B cell (primary cell): ENCODE measurements at regions of chrX and their contacts with region 1.

Region 1: GRCh38 chrX:149527705-149528104 is 13.1 kb upstream of the EOLA1 start:
- DNase-seq: peak; percentile 56
- ATAC-seq: peak; percentile 25
- H3K4me3 ChIP-seq: no peak overlapping the region
- H3K4me3 Mint-ChIP-seq: peak overlapping the region; percentile 7
- H3K27ac ChIP-seq: no peak overlapping the region
- H3K27ac Mint-ChIP-seq: peak overlapping the region; percentile 44
- H3K4me1 ChIP-seq: peaks cover 4 to 10% of the 10 kb centered on the region in 2 donors
- H3K4me1 Mint-ChIP-seq: peaks cover 17% of the 10 kb centered on the region
- H3K27me3 ChIP-seq: no peaks in the 10 kb centered on the region
- H3K27me3 Mint-ChIP-seq: no peaks in the 10 kb centered on the region
- CTCF ChIP-seq: peak; percentile 50

Region 2: DNA sequence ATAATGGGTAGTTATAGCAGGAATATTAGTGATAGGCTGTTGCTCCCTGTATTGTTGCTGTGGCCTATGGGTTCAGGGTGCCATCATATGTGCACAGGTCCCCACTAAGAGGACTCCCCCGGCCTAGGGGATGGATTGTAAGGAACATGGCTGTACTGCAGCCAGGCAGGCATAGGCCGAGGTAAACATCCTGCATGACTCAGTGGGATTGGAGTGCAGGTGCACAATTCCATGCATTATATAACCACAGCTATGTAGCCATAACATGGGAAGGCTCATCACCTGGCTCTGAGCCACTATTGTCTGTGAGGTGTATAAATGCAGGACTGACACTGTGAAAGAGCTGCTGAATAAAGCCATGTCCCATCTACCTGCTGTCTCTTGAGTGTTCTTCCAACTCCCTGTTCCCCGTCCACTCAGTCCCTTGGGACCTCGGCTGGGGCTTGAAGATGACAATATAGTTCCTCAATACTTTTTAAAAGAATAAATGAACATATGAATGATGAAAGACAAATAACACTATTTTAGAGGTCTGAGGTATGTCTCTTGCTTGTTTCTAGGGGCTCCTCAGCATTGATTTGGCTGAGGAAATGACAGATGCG is 447.8 kb before region 1 on chrX:
- CTCF ChIA-PET with region 1: no interaction called
- POLR2A ChIA-PET with region 1: no interaction called
- intact Hi-C with region 1: no loop called
- DNase-seq: no peak
- ATAC-seq: no peak
- H3K4me3 ChIP-seq: no peak overlapping the region
- H3K4me3 Mint-ChIP-seq: no peak overlapping the region
- H3K27ac ChIP-seq: no peak overlapping the region
- H3K27ac Mint-ChIP-seq: no peak overlapping the region
- H3K4me1 ChIP-seq: no peaks in the 10 kb centered on the region
- H3K4me1 Mint-ChIP-seq: no peaks in the 10 kb centered on the region
- H3K27me3 ChIP-seq: no peaks in the 10 kb centered on the region
- H3K27me3 Mint-ChIP-seq: no peaks in the 10 kb centered on the region
- CTCF ChIP-seq: no peak

Region 3: GRCh38 chrX:149504915-149505651 is 22.6 kb before region 1 on chrX and contains the start of gene IDS:
- CTCF ChIA-PET with region 1: interaction called, 4 read pairs
- POLR2A ChIA-PET with region 1: interaction called, 14 read pairs
- intact Hi-C with region 1: loop called (anchors 2 kb)
- DNase-seq: peak; percentile 91
- ATAC-seq: peak; percentile 72
- H3K4me3 ChIP-seq: peak within 1 kb of the TSS; percentile 24 to 81 (median 79)
- H3K4me3 Mint-ChIP-seq: peak within 1 kb of the TSS; percentile 95
- H3K27ac ChIP-seq: peak within 1 kb of the TSS; percentile 95 to 98
- H3K27ac Mint-ChIP-seq: peak within 1 kb of the TSS; percentile 96
- H3K4me1 ChIP-seq: peaks cover 12 to 24% of the 10 kb centered on the region in 2 donors
- H3K4me1 Mint-ChIP-seq: peaks cover 18% of the 10 kb centered on the region
- H3K27me3 ChIP-seq: peaks cover 0 to 5% (median 0%) of the 10 kb centered on the region in 4 experiments
- H3K27me3 Mint-ChIP-seq: peaks cover 2% of the 10 kb centered on the region
- CTCF ChIP-seq: no peak
- total RNA-seq, gene IDS: 169 TPM in 2 replicates

Region 4: DNA sequence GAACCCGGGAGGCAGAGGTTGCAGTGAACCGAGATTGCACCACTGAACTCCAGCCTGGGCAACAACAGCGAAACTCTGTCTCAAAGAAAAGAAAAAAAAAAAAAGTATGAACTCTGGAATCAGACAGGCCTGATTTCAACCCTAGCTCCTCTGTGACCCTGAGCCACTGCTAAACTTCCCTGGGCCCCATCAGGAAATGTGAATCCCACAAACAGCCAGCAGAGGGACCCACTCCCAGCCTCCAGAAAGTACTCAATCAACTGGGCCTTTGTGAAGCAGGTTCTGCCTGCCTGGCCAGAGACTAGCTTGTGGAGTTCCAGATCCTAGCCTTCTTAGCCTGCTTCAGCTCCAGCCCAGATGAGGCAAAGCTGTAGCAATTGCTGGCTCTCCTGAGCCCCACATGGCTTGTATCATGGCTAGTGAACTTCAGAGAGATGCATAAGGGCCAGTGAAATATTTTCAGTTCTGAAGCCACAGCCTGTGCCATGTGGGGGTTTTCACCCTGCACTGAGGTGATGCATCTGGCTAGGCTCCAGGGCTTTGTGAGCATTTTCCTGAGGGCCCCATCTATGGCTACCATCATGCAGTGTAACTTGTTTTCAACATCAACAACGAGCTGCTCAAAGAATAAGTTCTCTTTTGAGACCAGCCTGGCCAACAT is 15.3 kb before region 1 on chrX:
- CTCF ChIA-PET with region 1: interaction called, 22 read pairs
- POLR2A ChIA-PET with region 1: interaction called, 3 read pairs
- intact Hi-C with region 1: no loop called
- DNase-seq: peak; percentile 68
- ATAC-seq: peak; percentile 93
- H3K4me3 ChIP-seq: no peak overlapping the region
- H3K4me3 Mint-ChIP-seq: no peak overlapping the region
- H3K27ac ChIP-seq: no peak overlapping the region
- H3K27ac Mint-ChIP-seq: no peak overlapping the region
- H3K4me1 ChIP-seq: no peaks in the 10 kb centered on the region
- H3K4me1 Mint-ChIP-seq: peaks cover 4% of the 10 kb centered on the region
- H3K27me3 ChIP-seq: peaks cover 0 to 5% (median 0%) of the 10 kb centered on the region in 4 experiments
- H3K27me3 Mint-ChIP-seq: peaks cover 2% of the 10 kb centered on the region
- CTCF ChIP-seq: peak; percentile 59